SK-N-SH (cell line): ENCODE measurements at regions of chr7 and their contacts with region 1.

Region 1: DNA sequence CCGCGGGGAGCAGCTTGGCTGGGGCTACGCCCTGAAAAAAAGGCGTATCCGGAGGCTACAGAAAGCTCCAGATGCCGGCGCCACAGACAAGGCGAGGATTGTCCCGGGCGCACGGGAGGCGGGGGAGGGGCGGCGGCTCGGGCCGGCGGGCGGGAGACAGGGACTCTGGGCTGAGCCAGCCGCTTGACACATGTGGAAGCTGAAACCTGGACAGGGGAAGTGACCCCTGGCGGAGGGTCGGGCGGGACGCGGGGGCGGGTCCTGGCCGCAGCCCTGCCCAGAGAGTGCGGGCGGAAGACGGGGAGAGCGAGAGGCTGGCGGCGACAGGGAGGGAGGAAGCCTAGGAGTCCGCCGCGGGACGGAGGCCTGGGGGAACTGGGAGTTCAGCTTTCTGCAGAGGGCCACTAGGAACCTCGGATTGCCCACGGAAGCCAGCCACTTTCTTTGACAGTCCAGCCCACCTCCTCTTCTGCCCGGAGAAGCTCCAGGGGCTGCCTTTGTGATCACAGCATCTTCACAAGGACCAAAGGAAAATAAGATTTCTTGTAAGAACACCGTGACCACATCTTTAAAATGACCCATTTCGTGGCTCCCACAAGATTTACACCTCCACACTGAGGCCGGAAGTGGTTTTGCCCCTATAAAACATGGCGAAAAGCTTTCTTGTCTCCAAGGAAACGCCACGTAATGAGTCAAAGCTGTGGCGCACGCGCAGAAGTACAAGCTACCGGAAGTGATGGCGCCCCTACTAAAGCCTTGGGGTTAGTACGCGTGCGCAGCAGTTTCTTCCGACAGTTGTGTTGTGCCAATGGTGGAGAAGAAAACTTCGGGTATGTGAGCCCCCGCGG is at the starts of genes PLOD3 and ZNHIT1:
- DNase-seq: peak; percentile 100
- H3K4me3 ChIP-seq: peak within 1 kb of the TSS; percentile 66 to 84
- H3K27ac ChIP-seq: peak within 1 kb of the TSS; percentile 93 to 95
- H3K4me1 ChIP-seq: peaks cover 8 to 27% of the 10 kb centered on the region in 2 experiments; a peak in 2 of 4 replicates
- H3K27me3 ChIP-seq: no peaks in the 10 kb centered on the region
- CTCF ChIP-seq: peak; percentile 25; the same call in 1 of the 2 replicates
- EP300 ChIP-seq: peak in 1 of 2 experiments; percentile 35; a peak in 1 of 4 replicates
- RAD21 ChIP-seq: no peak
- polyA plus RNA-seq, gene PLOD3: 134 and 276 TPM in 2 replicates
- polyA plus RNA-seq, gene ZNHIT1: 71.6 and 101 TPM in 2 replicates

Region 2: GRCh38 chr7:101185258-101185839 is 32.3 kb before region 1 on chr7:
- CTCF ChIA-PET with region 1: interaction called, 4 read pairs
- POLR2A ChIA-PET with region 1: interaction called, 15 read pairs
- DNase-seq: no peak
- H3K4me3 ChIP-seq: no peak overlapping the region
- H3K27ac ChIP-seq: peak overlapping the region in 1 of 2 experiments; percentile 37; a peak in 2 of 4 replicates
- H3K4me1 ChIP-seq: peaks cover 0 to 8% of the 10 kb centered on the region in 2 experiments; a peak in 1 of 4 replicates
- H3K27me3 ChIP-seq: peaks cover 6% of the 10 kb centered on the region; the same call in 1 of the 2 replicates
- CTCF ChIP-seq: no peak
- EP300 ChIP-seq: no peak
- RAD21 ChIP-seq: no peak

Region 3: DNA sequence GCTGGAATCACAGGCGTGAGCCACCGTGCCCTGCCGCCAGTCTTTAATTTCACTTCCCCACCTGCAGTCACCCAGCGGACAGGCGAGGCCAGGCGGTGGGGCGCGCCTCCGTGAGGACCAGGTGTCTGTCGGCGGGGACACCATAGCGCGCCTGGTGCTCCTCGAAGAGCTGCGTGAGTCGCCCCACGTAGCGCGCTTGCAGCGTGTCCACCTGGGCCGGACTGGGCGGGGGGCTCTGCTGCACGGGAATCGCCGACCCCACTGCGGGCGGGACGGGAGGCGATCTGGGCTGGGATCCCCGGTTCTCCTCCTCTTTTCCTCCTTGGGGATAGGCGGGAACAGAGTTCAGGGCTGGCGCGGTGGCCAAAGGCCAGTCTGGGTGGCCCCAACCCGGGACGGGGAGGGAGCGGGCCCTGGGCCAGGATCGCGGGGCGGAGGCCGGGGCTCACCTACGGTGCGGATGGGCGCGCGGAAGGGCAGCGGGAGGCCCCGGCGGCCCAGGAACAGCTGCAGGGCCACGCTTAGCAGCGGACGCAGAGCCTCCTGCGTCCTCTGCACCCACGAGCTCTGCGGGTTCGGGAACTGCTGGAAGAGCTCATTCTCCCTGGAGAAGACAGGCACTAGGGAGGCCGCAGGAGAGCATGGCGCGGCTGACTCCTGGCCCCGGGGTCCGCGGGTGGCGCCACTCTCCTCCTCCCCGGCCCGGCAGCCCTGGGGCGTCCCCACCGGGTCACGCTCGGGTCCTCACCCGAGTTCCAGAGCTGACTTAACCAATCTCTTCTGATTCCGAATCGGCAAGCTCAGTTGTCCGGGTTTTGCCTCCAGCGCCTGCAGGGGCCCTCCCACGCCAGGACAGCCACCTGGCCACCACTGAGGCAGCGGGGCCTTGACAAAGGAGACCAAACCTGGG is 15.7 kb before region 1 on chr7:
- CTCF ChIA-PET with region 1: interaction called, 12 read pairs
- POLR2A ChIA-PET with region 1: interaction called, 8 read pairs
- DNase-seq: peak; percentile 42
- H3K4me3 ChIP-seq: no peak overlapping the region
- H3K27ac ChIP-seq: no peak overlapping the region
- H3K4me1 ChIP-seq: no peaks in the 10 kb centered on the region
- H3K27me3 ChIP-seq: no peaks in the 10 kb centered on the region; the same call in 1 of the 2 replicates
- CTCF ChIP-seq: no peak
- EP300 ChIP-seq: no peak
- RAD21 ChIP-seq: no peak

Region 4: GRCh38 chr7:101235050-101235449 is 17.4 kb after region 1 on chr7:
- CTCF ChIA-PET with region 1: interaction called, 19 read pairs
- POLR2A ChIA-PET with region 1: interaction called, 9 read pairs
- DNase-seq: peak; percentile 71
- H3K4me3 ChIP-seq: no peak overlapping the region
- H3K27ac ChIP-seq: no peak overlapping the region
- H3K4me1 ChIP-seq: peaks cover 0 to 5% of the 10 kb centered on the region in 2 experiments; a peak in 1 of 4 replicates
- H3K27me3 ChIP-seq: no peaks in the 10 kb centered on the region
- CTCF ChIP-seq: peak; percentile 61
- EP300 ChIP-seq: no peak
- RAD21 ChIP-seq: peak; percentile 42

Region 5: DNA sequence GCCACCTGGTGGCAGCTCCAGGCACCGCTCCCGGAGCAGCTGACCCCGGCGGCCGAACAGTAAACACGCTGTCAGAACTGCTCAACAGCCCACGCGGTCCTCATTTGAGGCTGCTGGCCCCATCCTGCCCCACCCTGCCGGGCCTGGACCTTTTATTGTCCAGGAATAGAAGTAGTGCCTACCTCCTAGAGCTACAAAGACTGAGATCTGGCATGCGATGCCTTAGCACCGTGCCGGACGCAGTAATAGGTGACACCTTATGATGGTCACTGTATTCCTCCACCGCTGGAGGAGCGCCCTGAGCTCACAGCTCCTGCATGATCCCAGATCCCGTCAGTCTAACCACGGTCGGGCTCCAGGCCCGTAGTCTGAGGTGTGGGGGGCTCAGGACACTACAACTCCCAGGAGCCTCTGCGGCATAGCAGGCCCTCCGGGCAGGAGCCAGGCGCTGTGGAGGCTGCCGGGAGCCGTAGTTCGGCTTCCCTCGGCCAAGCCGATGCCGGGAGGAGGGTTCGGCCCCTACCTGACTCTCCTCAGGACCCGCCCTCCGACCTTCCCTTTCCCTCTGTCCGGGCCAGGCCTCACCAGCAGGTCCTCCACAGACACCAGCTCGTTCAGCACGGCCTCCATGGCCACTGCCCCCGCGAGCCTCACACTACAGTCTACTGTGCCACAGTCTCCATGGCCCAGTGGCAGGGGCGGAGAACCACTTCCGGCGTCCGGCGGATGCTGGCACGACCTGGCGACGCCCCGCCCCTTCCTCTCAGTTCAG is 26.9 kb after region 1 on chr7 and contains the start of gene FIS1:
- CTCF ChIA-PET with region 1: interaction called, 42 read pairs
- POLR2A ChIA-PET with region 1: interaction called, 38 read pairs
- DNase-seq: peak; percentile 98
- H3K4me3 ChIP-seq: peak within 1 kb of the TSS; percentile 77 to 89
- H3K27ac ChIP-seq: peak within 1 kb of the TSS; percentile 80 to 93
- H3K4me1 ChIP-seq: peaks cover 7 to 14% of the 10 kb centered on the region in 2 experiments; a peak in 1 of 4 replicates
- H3K27me3 ChIP-seq: no peaks in the 10 kb centered on the region
- CTCF ChIP-seq: peak; percentile 98
- EP300 ChIP-seq: no peak
- RAD21 ChIP-seq: no peak; the same call in 1 of the 2 replicates
- polyA plus RNA-seq, gene FIS1: 1,071 and 1,313 TPM in 2 replicates

Region 6: GRCh38 chr7:101465576-101466196 is 248.1 kb after region 1 on chr7:
- CTCF ChIA-PET with region 1: no interaction called
- POLR2A ChIA-PET with region 1: no interaction called
- DNase-seq: no peak
- H3K4me3 ChIP-seq: no peak overlapping the region
- H3K27ac ChIP-seq: no peak overlapping the region
- H3K4me1 ChIP-seq: no peaks in the 10 kb centered on the region
- H3K27me3 ChIP-seq: peaks cover 22% of the 10 kb centered on the region; the same call in 1 of the 2 replicates
- CTCF ChIP-seq: no peak
- EP300 ChIP-seq: no peak
- RAD21 ChIP-seq: no peak